ENCODE measurements at regions of chr2 and their contacts with region 1.

Region 1: GRCh38 chr2:1923541-1923940 is 179.2 kb upstream of the PXDN start:
- DNase-seq: no peak
- H3K4me3 Mint-ChIP-seq: no peak overlapping the region
- H3K27ac Mint-ChIP-seq: no peak overlapping the region
- H3K4me1 Mint-ChIP-seq: peaks cover 6% of the 10 kb centered on the region
- H3K27me3 Mint-ChIP-seq: peaks cover 11% of the 10 kb centered on the region
- CTCF ChIP-seq: no peak

Region 2: DNA sequence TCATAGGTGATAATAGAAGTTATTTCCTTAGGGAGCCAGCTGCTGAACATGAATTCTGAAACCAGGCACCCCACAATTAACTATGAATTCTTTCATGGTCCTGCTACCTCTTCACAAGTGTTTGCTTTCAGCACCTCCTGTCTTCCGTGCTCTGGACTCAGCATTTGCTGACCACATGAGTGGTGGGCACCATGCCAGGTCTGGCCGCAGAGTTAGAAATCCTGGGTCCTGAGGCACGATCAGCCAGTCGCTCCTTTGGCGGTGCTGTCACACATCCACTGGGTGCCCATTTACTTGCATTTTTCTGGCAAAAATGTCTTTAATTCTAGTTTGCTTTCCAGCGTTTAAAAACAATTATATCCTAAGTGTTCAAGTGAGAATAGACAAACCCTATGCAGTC is 17.1 kb after region 1 on chr2:
- CTCF ChIA-PET with region 1: no interaction called
- POLR2A ChIA-PET with region 1: no interaction called
- intact Hi-C with region 1: no loop called
- DNase-seq: no peak
- H3K4me3 Mint-ChIP-seq: no peak overlapping the region
- H3K27ac Mint-ChIP-seq: no peak overlapping the region
- H3K4me1 Mint-ChIP-seq: no peaks in the 10 kb centered on the region
- H3K27me3 Mint-ChIP-seq: no peaks in the 10 kb centered on the region
- CTCF ChIP-seq: no peak

Region 3: GRCh38 chr2:2026252-2026831 is 102.8 kb after region 1 on chr2:
- CTCF ChIA-PET with region 1: interaction called, 3 read pairs
- POLR2A ChIA-PET with region 1: no interaction called
- intact Hi-C with region 1: loop called (anchors 10 kb)
- DNase-seq: peak; percentile 77
- H3K4me3 Mint-ChIP-seq: no peak overlapping the region
- H3K27ac Mint-ChIP-seq: no peak overlapping the region
- H3K4me1 Mint-ChIP-seq: peaks cover 6% of the 10 kb centered on the region
- H3K27me3 Mint-ChIP-seq: no peaks in the 10 kb centered on the region
- CTCF ChIP-seq: no peak